ENCODE measurements at regions of chr19 and their contacts with region 1.

Region 1: DNA sequence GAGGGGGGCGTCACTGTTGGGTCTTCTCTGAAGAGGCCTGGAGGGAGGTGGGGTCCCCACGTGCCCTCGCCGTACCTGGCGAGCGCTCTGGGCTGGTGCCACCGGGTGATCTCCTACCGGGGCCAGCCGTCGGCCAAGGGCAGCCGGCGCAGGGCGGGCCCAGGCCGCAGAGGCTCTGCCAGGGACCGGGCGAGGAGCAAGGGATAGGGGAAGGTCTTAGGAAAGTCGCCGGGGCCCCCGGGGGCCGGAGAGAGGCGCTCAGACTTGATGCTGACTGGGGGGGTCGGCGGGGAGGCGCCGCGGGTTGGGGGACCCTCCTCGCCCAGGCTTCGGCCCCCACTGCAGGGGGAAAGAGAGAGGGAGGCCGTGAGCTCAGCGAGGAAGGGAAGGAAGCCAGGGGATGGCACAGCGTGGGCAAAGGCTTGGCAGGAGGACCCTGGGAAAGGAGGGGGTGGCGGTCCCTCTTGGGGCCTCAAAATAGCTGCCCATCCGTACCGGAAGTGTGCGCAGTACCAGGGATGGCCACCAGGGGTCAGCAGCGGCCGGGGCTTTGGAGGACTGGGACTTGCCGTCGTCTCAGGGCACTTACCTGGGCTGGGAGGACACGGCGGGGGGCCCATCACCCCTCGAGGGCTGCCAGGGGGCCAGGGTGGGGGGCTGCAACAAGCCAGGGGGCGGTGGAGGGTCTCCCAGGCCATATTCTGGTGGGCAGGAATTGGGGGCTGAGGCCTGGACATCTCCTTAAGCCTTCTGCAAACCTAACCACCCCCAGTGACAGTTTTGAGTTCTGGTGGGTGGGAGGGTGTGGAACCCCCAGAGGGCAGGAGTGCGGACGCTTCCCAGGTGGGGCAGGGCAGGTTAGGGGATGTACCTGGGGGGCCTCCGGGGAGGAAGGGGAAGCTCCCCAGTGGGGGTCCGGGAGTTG is 7.7 kb upstream of the TMEM161A start:
- DNase-seq: peak; percentile 87
- H3K4me3 ChIP-seq: peak overlapping the region in 3 of 4 donors; percentile 11 to 36 (median 28)
- H3K27ac ChIP-seq: no peak overlapping the region
- H3K4me1 ChIP-seq: peaks cover 0 to 9% (median 8%) of the 10 kb centered on the region in 4 donors
- H3K27me3 ChIP-seq: no peaks in the 10 kb centered on the region
- CTCF ChIP-seq: peak; percentile 87 to 99 (median 96)
- EP300 ChIP-seq: no peak
- POLR2A ChIP-seq: no peak

Region 2: GRCh38 chr19:19224852-19225494 is 79.0 kb after region 1 on chr19:
- intact Hi-C with region 1: loop called (anchors 5 kb)
- DNase-seq: no peak
- H3K4me3 ChIP-seq: peak overlapping the region in 3 of 4 donors; percentile 12 to 43 (median 39)
- H3K27ac ChIP-seq: no peak overlapping the region
- H3K4me1 ChIP-seq: peaks cover 0 to 9% (median 8%) of the 10 kb centered on the region in 4 donors
- H3K27me3 ChIP-seq: peaks cover 16 to 67% (median 43%) of the 10 kb centered on the region in 3 donors
- CTCF ChIP-seq: peak in 2 of 4 experiments; percentile 28 to 41
- EP300 ChIP-seq: no peak
- POLR2A ChIP-seq: no peak

Region 3: GRCh38 chr19:19342756-19343322 is 196.9 kb after region 1 on chr19:
- intact Hi-C with region 1: loop called (anchors 10 kb)
- DNase-seq: no peak
- H3K4me3 ChIP-seq: no peak overlapping the region
- H3K27ac ChIP-seq: no peak overlapping the region
- H3K4me1 ChIP-seq: no peaks in the 10 kb centered on the region
- H3K27me3 ChIP-seq: no peaks in the 10 kb centered on the region
- CTCF ChIP-seq: peak; percentile 50 to 85 (median 68)
- EP300 ChIP-seq: no peak
- POLR2A ChIP-seq: no peak